Activated CD4-positive, alpha-beta T cell treated with anti-CD3 and anti-CD28 coated beads for 36 hours (primary cell): ENCODE measurements at regions of chr6 and their contacts with region 1.

Region 1: GRCh38 chr6:111873178-111874024 is at the start of gene FYN:
- DNase-seq: peak; percentile 100
- ATAC-seq: peak; percentile 87
- H3K4me3 Mint-ChIP-seq: peak within 1 kb of the TSS; percentile 98
- H3K27ac Mint-ChIP-seq: peak within 1 kb of the TSS; percentile 91
- H3K4me1 Mint-ChIP-seq: peaks cover 35% of the 10 kb centered on the region
- H3K27me3 Mint-ChIP-seq: no peaks in the 10 kb centered on the region
- total RNA-seq, gene FYN: 345 to 504 TPM

Region 2: DNA sequence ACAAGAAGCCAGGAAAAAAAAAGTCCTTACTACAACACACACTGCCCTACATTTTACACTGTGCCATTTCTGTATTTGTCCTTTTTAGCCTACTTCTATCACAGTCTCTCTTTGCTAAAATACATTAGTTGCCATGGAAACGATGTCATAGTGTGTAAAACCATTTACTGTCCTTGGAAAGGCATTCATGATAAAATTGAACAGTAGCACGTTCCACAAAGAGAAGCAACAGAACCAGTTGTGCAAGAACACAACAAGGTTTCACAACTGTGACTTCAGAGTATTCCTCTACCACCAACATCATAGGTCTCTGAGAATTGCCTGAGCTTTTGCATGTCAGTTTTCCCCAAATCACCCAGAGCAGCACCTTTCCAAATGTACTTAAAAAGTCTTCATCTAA is 20.7 kb before region 1 on chr6:
- CTCF ChIA-PET with region 1: interaction called, 22 read pairs
- POLR2A ChIA-PET with region 1: interaction called, 3 read pairs
- intact Hi-C with region 1: no loop called
- DNase-seq: no peak
- ATAC-seq: no peak
- H3K4me3 Mint-ChIP-seq: no peak overlapping the region
- H3K27ac Mint-ChIP-seq: peak overlapping the region; percentile 77
- H3K4me1 Mint-ChIP-seq: peaks cover 97% of the 10 kb centered on the region
- H3K27me3 Mint-ChIP-seq: no peaks in the 10 kb centered on the region

Region 3: DNA sequence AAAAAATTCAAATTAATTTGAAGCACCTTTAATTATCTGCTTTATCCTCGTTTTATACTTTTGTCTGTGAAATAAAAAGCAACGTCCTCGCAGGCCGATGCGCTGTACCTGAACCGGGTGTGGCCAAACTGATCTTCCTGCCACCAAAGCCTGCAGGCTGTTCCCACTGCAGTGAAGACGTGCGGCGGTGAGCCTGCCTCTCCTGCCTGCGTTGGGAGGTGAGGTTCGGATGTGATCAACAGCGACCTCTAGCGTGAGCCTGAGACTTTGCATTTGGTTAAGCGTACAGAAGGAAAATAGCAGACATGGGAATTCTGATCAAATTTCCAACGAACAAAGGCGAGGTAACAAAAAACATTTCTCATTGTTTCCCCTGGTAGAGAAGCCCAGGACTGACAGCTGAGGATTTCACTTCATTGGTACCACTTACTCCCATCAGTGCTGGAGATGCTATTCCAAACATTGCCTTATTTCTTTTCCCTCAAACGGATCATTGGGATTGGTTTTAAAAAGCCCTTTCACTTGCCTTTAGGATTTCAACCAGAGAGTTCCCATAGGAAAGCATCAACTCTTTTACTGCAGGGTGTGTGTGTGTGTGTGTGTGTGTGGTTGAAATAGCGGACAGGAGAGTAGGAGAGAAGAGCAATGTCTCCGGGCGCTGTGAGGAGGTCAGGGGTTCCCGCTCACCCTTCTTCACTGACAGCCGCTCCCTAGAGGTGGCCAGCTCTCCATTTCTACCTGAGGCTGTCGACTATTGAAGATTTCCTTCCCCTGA is 123.9 kb after region 1 on chr6:
- CTCF ChIA-PET with region 1: interaction called, 6 read pairs
- POLR2A ChIA-PET with region 1: interaction called, 5 read pairs
- intact Hi-C with region 1: loop called (anchors 1 to 2 kb)
- DNase-seq: peak; percentile 89
- ATAC-seq: peak; percentile 71
- H3K4me3 Mint-ChIP-seq: peak overlapping the region; percentile 43
- H3K27ac Mint-ChIP-seq: peak overlapping the region; percentile 72
- H3K4me1 Mint-ChIP-seq: peaks cover 51% of the 10 kb centered on the region
- H3K27me3 Mint-ChIP-seq: no peaks in the 10 kb centered on the region

Region 4: GRCh38 chr6:112018619-112019416 is 145.4 kb after region 1 on chr6:
- CTCF ChIA-PET with region 1: interaction called, 3 read pairs
- POLR2A ChIA-PET with region 1: interaction called, 11 read pairs
- intact Hi-C with region 1: no loop called
- DNase-seq: no peak
- ATAC-seq: no peak
- H3K4me3 Mint-ChIP-seq: no peak overlapping the region
- H3K27ac Mint-ChIP-seq: peak overlapping the region; percentile 43
- H3K4me1 Mint-ChIP-seq: peaks cover 78% of the 10 kb centered on the region
- H3K27me3 Mint-ChIP-seq: no peaks in the 10 kb centered on the region